Transverse colon (tissue), 4 donors: ENCODE measurements at regions of chr1 and their contacts with region 1.

Region 1: GRCh38 chr1:234978397-234979295 is 150.0 kb downstream of the TOMM20 start:
- DNase-seq: peak; percentile 79
- H3K4me3 ChIP-seq: peak overlapping the region in 1 of 4 donors; percentile 17
- H3K27ac ChIP-seq: peak overlapping the region; percentile 88 to 91 (median 88)
- H3K4me1 ChIP-seq: peaks cover 59 to 80% (median 66%) of the 10 kb centered on the region in 4 donors
- H3K27me3 ChIP-seq: no peaks in the 10 kb centered on the region
- CTCF ChIP-seq: peak in 3 of 5 experiments; percentile 5 to 15 (median 15)
- EP300 ChIP-seq: peak; percentile 31
- POLR2A ChIP-seq: no peak

Region 2: DNA sequence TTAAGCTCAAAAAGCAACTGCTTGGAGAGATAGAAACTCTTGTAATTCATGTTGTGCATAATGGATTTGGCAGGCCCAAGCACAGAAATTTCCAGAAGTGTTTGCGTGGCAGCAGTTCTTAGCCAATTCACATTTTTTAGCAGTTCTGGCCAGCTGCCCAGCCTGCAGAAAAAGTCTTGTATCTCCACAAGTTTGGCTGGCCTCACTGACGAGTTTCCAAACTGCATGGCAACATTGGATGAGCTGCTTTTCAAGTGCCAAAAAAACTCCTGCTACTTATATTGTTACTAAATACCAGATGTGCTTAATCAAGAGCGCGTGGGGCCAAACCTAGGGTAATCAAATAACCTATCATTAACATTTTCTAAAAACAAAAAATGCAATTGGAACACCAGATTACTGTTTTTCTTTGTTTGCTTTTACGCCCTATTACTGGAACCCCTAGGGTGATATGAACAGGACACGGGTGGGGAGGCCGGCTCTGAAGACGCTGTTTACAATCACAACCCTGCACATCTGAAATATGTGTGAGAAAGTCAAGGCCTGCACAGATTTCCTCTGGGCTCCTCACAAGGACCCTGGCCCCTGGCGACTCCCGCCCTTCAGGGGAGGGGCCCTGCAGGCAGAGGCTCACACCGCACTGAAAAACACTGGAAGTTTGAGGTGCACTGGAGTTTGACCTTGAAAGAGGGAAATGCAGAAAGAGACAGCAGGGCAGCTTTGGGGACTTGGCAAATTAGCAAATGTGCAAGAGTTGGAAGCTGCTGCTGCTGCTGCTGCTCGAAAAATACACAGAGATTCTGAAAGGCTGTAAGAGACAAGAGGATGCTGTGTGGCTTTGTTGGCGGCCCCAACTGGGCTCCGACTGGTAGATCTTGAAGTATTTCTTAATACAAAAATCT is 444.4 kb before region 1 on chr1:
- in situ Hi-C with region 1: no loop called
- intact Hi-C with region 1: loop called (anchors 10 kb)
- DNase-seq: peak; percentile 80
- H3K4me3 ChIP-seq: no peak overlapping the region
- H3K27ac ChIP-seq: peak overlapping the region; percentile 91 to 93 (median 93)
- H3K4me1 ChIP-seq: peaks cover 79 to 96% (median 82%) of the 10 kb centered on the region in 4 donors
- H3K27me3 ChIP-seq: no peaks in the 10 kb centered on the region
- CTCF ChIP-seq: no peak
- EP300 ChIP-seq: peak; percentile 39
- POLR2A ChIP-seq: no peak

Region 3: GRCh38 chr1:234599617-234600417 is 378.8 kb before region 1 on chr1:
- in situ Hi-C with region 1: loop called in 2 of 4 experiments (anchors 5 to 10 kb)
- intact Hi-C with region 1: no loop called
- DNase-seq: peak; percentile 92
- H3K4me3 ChIP-seq: peak overlapping the region; percentile 13 to 56 (median 43)
- H3K27ac ChIP-seq: peak overlapping the region; percentile 98 to 100 (median 99)
- H3K4me1 ChIP-seq: peaks cover 26 to 66% (median 57%) of the 10 kb centered on the region in 4 donors
- H3K27me3 ChIP-seq: no peaks in the 10 kb centered on the region
- CTCF ChIP-seq: peak in 1 of 5 experiments; percentile 24
- EP300 ChIP-seq: peak; percentile 31
- POLR2A ChIP-seq: peak; percentile 81

Region 4: DNA sequence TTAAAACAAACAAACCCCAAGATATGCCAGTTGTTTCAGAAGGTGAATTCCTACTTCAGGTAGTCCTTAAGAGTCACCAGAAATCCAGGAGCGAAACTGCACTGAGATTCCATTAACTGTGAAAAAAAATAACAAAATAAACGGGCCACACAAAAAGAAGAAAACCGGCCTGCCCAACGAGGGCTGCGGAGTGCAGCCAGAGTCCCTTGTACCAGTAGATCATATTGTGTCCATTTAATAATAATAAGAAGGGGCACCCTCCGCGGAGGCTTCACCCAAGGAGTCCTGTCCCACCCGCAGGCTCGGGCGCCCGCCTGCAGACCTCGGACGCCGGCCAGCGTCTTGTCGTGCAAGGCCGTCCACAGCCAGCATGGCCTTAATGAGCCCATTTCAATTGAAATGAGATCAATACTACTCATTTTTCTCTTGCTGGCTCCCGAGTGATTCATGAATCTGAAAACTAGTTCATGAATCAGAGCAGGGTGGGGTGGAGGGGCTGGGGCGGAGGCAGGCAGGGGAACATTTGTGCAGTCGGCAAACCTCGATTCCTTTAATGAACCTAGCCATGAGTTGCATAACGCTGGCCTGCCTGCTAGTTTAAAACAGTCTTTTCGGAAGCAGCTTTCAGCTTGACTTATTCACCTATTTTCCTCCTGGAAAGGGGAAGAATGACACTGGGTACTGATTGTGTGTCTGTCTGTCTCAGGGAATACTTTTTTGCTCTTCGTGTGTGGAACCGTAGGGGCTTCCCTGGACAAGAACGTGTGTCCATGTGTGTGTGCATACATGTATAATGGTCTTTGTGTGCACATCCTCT is 255.5 kb before region 1 on chr1:
- in situ Hi-C with region 1: loop called in 2 of 4 experiments (anchors 10 kb)
- intact Hi-C with region 1: loop called (anchors 5 kb)
- DNase-seq: peak; percentile 73
- H3K4me3 ChIP-seq: peak overlapping the region in 1 of 4 donors; percentile 14
- H3K27ac ChIP-seq: peak overlapping the region; percentile 97 to 99 (median 98)
- H3K4me1 ChIP-seq: peaks cover 73 to 93% (median 77%) of the 10 kb centered on the region in 4 donors
- H3K27me3 ChIP-seq: no peaks in the 10 kb centered on the region
- CTCF ChIP-seq: no peak
- EP300 ChIP-seq: no peak
- POLR2A ChIP-seq: no peak

Region 5: GRCh38 chr1:234963180-234963903 is 15.3 kb before region 1 on chr1:
- in situ Hi-C with region 1: no loop called
- intact Hi-C with region 1: no loop called
- DNase-seq: peak; percentile 88
- H3K4me3 ChIP-seq: no peak overlapping the region
- H3K27ac ChIP-seq: peak overlapping the region; percentile 88 to 94 (median 90)
- H3K4me1 ChIP-seq: peaks cover 35 to 69% (median 67%) of the 10 kb centered on the region in 4 donors
- H3K27me3 ChIP-seq: no peaks in the 10 kb centered on the region
- CTCF ChIP-seq: no peak
- EP300 ChIP-seq: no peak
- POLR2A ChIP-seq: no peak

Region 6: GRCh38 chr1:235105051-235106043 is 126.7 kb after region 1 on chr1:
- in situ Hi-C with region 1: no loop called
- intact Hi-C with region 1: no loop called
- DNase-seq: no peak
- H3K4me3 ChIP-seq: no peak overlapping the region
- H3K27ac ChIP-seq: peak overlapping the region in 1 of 4 donors; percentile 42
- H3K4me1 ChIP-seq: peaks cover 6 to 20% (median 16%) of the 10 kb centered on the region in 4 donors
- H3K27me3 ChIP-seq: no peaks in the 10 kb centered on the region
- CTCF ChIP-seq: no peak
- EP300 ChIP-seq: no peak
- POLR2A ChIP-seq: no peak